ENCODE measurements at regions of chr6 and their contacts with region 1.

Region 1: GRCh38 chr6:152124429-152125074 is 317.1 kb downstream of the ESR1 start:
- DNase-seq: no peak
- H3K4me3 ChIP-seq: no peak overlapping the region
- H3K27ac ChIP-seq: no peak overlapping the region
- H3K4me1 ChIP-seq: peaks cover 0 to 54% (median 20%) of the 10 kb centered on the region in 4 donors
- H3K27me3 ChIP-seq: no peaks in the 10 kb centered on the region
- CTCF ChIP-seq: peak; percentile 77 to 85

Region 2: DNA sequence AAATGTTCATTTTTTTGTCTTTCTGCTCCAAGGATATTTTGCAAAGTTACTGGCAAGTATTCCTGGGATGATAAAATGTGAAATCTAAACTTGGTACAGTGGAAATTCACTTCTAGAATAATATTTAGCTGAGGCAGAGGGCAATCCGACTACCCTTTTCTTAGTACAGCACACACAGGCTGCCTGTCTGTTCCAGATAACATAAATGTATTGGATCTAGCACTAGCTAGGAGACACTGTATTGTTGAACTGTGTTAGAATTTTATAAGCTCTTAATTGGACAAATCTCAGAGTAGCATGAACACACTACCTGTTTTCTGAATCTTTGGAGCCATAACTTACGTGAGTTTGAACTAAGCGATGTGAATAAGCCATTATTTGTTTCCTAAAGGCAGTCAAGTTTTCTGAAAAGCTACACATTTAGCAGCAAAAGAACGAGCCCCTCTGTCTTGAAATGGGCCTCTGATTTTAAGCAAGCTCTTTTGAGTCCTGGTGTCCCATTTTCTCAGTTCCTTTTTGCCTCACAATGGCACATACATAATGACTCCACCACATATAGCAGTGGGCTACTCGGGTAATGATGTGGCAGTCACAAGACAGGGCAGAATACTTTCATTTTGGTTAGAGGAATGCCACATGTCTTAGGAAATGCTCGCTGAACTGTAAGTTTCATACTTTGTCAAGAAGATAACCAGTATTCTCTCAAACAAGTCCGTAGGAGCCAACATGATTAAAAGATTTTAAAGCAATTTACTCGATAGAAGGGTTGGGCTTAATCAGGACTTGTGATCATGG is 433.6 kb before region 1 on chr6:
- intact Hi-C with region 1: loop called (anchors 2 kb)
- DNase-seq: no peak
- H3K4me3 ChIP-seq: peak overlapping the region; percentile 38 to 39
- H3K27ac ChIP-seq: peak overlapping the region; percentile 73 to 75
- H3K4me1 ChIP-seq: peaks cover 0 to 28% (median 4%) of the 10 kb centered on the region in 4 donors
- H3K27me3 ChIP-seq: no peaks in the 10 kb centered on the region
- CTCF ChIP-seq: no peak

Region 3: GRCh38 chr6:151765444-151765886 is 359.1 kb before region 1 on chr6:
- intact Hi-C with region 1: loop called (anchors 2 kb)
- DNase-seq: peak in 1 of 2 donors; percentile 65
- H3K4me3 ChIP-seq: no peak overlapping the region
- H3K27ac ChIP-seq: no peak overlapping the region
- H3K4me1 ChIP-seq: peaks cover 3 to 10% (median 6%) of the 10 kb centered on the region in 4 donors
- H3K27me3 ChIP-seq: no peaks in the 10 kb centered on the region
- CTCF ChIP-seq: peak; percentile 74 to 80

Measured in tibial artery (tissue), 4 donors.